PC-9 (cell line): ENCODE measurements at regions of chr16 and their contacts with region 1.

Region 1: DNA sequence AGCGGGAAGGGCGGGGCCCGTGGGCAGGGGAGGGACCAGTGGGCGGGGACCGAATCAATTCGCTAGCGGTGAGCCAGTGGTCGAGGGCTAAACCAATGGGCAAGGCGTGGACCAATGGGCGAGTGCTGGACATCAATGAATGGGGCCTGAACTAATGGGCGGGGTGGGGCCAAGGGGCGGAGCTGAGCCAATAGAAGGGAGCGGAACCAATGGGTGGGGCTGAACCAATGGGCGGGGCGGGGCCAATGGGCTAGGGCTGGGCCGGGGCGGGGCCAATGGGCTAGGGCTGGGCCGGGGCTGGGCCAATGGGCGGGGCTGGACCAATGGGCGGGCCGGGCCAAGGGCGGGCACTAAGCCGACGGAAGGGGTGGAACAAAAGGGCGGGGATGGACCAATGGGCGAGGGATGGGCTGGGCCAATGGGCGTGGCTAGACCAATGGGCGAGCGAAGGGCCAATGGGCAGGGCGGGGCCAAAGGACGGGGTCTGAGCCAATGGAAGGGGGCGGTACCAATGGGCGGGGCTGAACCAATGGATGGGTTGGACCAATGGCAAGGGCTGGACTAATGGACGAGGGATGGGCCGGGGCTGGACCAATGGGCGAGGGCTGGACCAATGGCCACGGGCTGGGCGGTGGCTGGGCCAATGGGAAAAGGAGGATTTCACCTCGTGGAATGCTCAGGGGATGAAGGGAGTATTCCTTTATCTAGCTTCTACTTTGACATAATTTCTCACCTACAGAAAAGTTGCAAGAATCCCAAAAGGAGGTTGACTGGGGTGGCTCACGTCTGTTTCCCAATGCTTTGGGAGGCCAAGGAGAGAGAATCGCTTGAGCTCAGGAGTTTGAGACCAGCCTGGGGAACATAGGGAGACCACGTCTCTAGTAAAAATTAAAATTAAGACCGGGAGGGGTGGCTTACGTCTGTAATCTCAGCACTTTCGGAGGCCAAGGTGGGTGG is 6.0 kb upstream of the FLYWCH1 start:
- DNase-seq: peak; percentile 95 to 100
- H3K4me3 ChIP-seq: peak overlapping the region; percentile 86; the same call in 1 of the 2 replicates
- H3K27ac ChIP-seq: no peak overlapping the region
- H3K4me1 ChIP-seq: peaks cover 24% of the 10 kb centered on the region
- H3K27me3 ChIP-seq: no peaks in the 10 kb centered on the region
- CTCF ChIP-seq: no peak

Region 2: DNA sequence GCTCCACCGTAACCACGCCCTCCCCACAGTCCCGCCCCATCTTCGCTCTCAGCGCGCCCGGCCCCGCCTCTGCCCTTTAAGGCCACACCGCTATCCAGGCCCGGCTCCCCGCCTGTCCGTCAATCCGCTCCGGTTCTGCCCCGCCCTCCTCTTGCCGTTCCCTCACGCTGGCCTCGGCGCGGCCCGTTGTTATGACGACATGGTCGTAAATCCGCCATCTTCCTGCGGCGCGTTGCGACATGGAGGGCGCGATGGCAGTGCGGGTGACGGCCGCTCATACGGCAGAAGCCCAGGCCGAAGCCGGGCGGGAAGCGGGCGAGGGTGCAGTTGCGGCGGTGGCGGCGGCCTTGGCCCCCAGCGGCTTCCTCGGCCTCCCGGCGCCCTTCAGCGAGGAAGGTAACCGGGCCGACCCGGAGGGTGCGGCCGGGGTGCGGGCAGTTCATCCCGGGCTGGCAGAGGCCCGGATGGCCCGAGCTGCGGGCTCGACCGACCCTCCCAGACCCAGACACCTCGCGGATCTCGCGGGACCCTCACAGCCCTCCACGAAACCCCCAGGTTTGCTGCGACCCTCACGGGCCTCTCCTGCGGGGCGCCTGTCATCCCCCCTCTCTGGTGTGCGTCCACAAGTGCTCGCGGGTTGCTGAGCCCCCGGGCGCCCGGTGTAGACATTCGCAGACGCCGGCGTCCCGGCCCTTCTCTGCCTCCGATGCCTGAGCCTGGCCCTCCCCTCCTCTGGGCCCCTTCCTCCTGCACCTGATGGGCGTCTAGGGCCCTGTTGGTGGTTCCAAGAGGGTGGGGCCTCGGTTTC is 682.1 kb before region 1 on chr16 and contains the start of gene E4F1:
- CTCF ChIA-PET with region 1: no interaction called
- POLR2A ChIA-PET with region 1: no interaction called
- intact Hi-C with region 1: loop called (anchors 10 kb)
- DNase-seq: peak; percentile 96 to 100
- H3K4me3 ChIP-seq: peak within 1 kb of the TSS; percentile 83
- H3K27ac ChIP-seq: peak within 1 kb of the TSS; percentile 24
- H3K4me1 ChIP-seq: peaks cover 20% of the 10 kb centered on the region
- H3K27me3 ChIP-seq: no peaks in the 10 kb centered on the region
- CTCF ChIP-seq: no peak
- total RNA-seq, gene E4F1: 38.8 and 41.1 TPM in 2 replicates

Region 3: GRCh38 chr16:2673066-2673999 is 232.4 kb before region 1 on chr16:
- CTCF ChIA-PET with region 1: no interaction called
- POLR2A ChIA-PET with region 1: no interaction called
- intact Hi-C with region 1: loop called (anchors 2 kb)
- DNase-seq: peak; percentile 92 to 100
- H3K4me3 ChIP-seq: peak overlapping the region; percentile 72
- H3K27ac ChIP-seq: peak overlapping the region; percentile 46
- H3K4me1 ChIP-seq: peaks cover 19% of the 10 kb centered on the region
- H3K27me3 ChIP-seq: no peaks in the 10 kb centered on the region
- CTCF ChIP-seq: no peak

Region 4: DNA sequence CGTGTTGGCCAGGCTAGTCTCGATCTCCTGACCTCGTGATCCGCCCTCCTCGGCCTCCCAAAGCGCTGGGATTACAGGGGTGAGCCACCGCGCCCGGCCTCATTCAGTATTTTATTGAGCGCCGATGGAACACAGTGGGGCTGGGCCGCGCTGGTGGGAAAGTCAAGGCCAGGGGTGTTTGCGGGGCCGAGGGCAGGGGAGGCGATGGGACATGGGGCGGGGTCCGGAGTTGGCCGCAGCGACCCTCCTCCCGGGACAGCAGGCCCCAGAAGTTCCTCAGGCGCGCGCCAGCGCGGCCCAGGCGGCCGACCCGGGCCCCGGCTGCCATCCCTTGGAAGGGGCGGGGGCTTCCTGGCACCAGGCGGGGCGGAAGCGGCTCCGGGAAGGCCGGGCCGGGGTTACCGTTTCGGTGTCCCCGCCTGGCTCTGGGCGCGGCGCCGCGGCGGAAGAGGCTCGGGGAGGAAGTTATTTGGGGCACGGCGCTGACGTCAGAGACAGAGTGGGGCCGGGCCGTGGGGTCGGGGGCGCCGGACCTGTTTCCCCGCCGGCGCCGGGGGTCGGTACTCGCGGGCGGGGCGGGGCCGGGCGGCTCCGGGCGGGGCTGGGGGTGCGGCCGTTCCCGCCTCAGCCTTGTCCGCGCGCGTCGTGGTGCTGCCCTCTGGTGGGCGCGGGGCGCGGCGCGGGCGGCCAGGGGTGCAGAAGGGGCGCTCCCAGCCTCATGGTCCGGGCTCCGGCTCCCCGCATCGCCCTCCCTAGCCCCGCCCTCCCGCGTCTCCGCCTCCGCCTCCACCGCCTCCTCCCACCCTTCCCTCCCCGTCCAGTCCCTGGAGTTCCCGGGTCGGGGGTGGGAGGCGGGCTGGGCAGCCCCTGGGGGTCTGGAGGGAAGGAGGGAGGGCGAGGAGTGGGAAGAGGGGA is 184.7 kb before region 1 on chr16:
- CTCF ChIA-PET with region 1: no interaction called
- POLR2A ChIA-PET with region 1: no interaction called
- intact Hi-C with region 1: loop called (anchors 2 kb)
- DNase-seq: peak; percentile 71 to 94
- H3K4me3 ChIP-seq: peak overlapping the region; percentile 64
- H3K27ac ChIP-seq: peak overlapping the region; percentile 72
- H3K4me1 ChIP-seq: peaks cover 34% of the 10 kb centered on the region
- H3K27me3 ChIP-seq: no peaks in the 10 kb centered on the region
- CTCF ChIP-seq: peak; percentile 34; the same call in 1 of the 2 replicates

Region 5: GRCh38 chr16:2734844-2735515 is 170.7 kb before region 1 on chr16:
- CTCF ChIA-PET with region 1: no interaction called
- POLR2A ChIA-PET with region 1: no interaction called
- intact Hi-C with region 1: no loop called
- DNase-seq: no peak
- H3K4me3 ChIP-seq: no peak overlapping the region
- H3K27ac ChIP-seq: no peak overlapping the region
- H3K4me1 ChIP-seq: no peaks in the 10 kb centered on the region
- H3K27me3 ChIP-seq: no peaks in the 10 kb centered on the region
- CTCF ChIP-seq: no peak

Region 6: GRCh38 chr16:2745116-2745890 is 160.4 kb before region 1 on chr16:
- CTCF ChIA-PET with region 1: no interaction called
- POLR2A ChIA-PET with region 1: interaction called, 19 read pairs
- intact Hi-C with region 1: no loop called
- DNase-seq: no peak
- H3K4me3 ChIP-seq: no peak overlapping the region
- H3K27ac ChIP-seq: no peak overlapping the region
- H3K4me1 ChIP-seq: peaks cover 1% of the 10 kb centered on the region
- H3K27me3 ChIP-seq: no peaks in the 10 kb centered on the region
- CTCF ChIP-seq: no peak

Region 7: DNA sequence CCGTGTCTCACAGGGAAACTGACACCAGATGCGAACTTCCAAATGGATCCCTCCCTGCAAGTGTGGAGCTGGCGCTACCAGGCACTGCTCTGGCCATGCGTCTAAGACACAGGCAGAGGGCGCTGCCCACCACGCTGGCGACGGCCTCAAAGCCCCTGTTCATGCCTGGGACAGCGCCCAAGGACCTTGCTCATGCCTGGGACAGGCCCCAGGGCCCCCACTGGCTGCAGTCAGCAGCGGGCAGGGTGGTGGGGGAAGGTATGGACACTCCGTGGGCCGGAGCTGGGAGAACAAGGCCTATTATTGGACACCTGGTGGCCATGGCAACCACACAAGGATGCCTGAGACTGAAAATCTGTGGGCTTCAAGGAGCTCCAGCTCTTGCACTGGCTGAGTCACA is 66.8 kb before region 1 on chr16:
- CTCF ChIA-PET with region 1: no interaction called
- POLR2A ChIA-PET with region 1: no interaction called
- intact Hi-C with region 1: loop called (anchors 5 kb)
- DNase-seq: no peak
- H3K4me3 ChIP-seq: no peak overlapping the region
- H3K27ac ChIP-seq: no peak overlapping the region
- H3K4me1 ChIP-seq: peaks cover 32% of the 10 kb centered on the region
- H3K27me3 ChIP-seq: no peaks in the 10 kb centered on the region
- CTCF ChIP-seq: 0 out of 2 replicates have a peak, but pooled peaks have one; percentile 52

Region 8: GRCh38 chr16:2968738-2969544 is 63.2 kb after region 1 on chr16 and contains the start of gene PAQR4:
- CTCF ChIA-PET with region 1: no interaction called
- POLR2A ChIA-PET with region 1: interaction called, 3 read pairs
- intact Hi-C with region 1: loop called (anchors 2 kb)
- DNase-seq: peak; percentile 68 to 95
- H3K4me3 ChIP-seq: peak within 1 kb of the TSS; percentile 77
- H3K27ac ChIP-seq: no peak within 1 kb of the TSS
- H3K4me1 ChIP-seq: peaks cover 5% of the 10 kb centered on the region
- H3K27me3 ChIP-seq: no peaks in the 10 kb centered on the region
- CTCF ChIP-seq: no peak
- total RNA-seq, gene PAQR4: 33.6 and 40.7 TPM in 2 replicates